Psoas muscle (tissue), 8 donors: ENCODE measurements at regions of chr7 and their contacts with region 1.

Region 1: DNA sequence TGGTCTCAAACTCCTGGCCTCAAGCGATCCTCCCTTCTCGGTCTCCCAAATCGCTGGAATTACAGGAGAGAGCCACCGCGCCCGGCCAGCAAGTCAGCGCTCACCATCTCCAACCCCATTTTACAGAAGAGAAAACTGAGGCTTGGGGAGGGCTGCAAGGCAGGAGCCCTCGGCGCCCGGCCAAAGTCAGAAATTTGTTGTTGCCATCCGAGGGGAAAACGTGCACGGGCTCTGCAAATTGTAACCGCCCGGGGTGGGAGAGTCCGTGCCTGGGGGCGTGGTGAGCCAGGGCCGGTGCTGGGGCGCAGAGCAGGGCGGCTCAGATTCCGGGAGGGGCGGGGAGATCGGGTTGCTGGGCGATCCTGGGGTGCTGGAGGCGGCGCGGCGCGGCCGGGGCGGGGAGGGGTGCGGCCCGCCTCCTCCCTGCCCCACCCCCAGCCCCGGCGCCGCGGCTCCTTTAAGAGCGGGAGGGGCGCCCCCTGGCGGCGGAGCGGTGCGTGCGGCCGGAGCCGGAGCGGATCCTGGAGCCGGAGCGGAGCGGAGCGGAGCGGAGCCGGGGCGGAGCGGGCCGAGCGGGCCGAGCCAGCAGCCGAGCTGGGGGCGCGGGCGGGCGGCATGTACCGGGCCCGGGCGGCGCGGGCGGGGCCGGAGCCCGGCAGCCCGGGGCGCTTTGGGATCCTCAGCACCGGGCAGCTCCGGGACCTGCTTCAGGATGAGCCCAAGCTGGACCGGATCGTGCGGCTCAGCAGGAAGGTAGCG is at the start of gene VPS37D:
- DNase-seq: peak; percentile 91 to 94
- ATAC-seq: peak; percentile 95 to 99 (median 96)
- H3K4me3 ChIP-seq: peak within 1 kb of the TSS; percentile 68
- H3K27ac ChIP-seq: no peak within 1 kb of the TSS
- H3K4me1 ChIP-seq: no peaks in the 10 kb centered on the region
- H3K27me3 ChIP-seq: no peaks in the 10 kb centered on the region
- CTCF ChIP-seq: peak; percentile 87
- total RNA-seq, gene VPS37D: 0.18 to 1.1 (median 0.72) TPM

Region 2: GRCh38 chr7:73615886-73616285 is 51.6 kb before region 1 on chr7:
- intact Hi-C with region 1: loop called in 1 of 2 experiments (anchors 2 kb)
- DNase-seq: no peak
- ATAC-seq: no peak
- H3K4me3 ChIP-seq: no peak overlapping the region
- H3K27ac ChIP-seq: no peak overlapping the region
- H3K4me1 ChIP-seq: peaks cover 20% of the 10 kb centered on the region
- H3K27me3 ChIP-seq: no peaks in the 10 kb centered on the region
- CTCF ChIP-seq: no peak

Region 3: DNA sequence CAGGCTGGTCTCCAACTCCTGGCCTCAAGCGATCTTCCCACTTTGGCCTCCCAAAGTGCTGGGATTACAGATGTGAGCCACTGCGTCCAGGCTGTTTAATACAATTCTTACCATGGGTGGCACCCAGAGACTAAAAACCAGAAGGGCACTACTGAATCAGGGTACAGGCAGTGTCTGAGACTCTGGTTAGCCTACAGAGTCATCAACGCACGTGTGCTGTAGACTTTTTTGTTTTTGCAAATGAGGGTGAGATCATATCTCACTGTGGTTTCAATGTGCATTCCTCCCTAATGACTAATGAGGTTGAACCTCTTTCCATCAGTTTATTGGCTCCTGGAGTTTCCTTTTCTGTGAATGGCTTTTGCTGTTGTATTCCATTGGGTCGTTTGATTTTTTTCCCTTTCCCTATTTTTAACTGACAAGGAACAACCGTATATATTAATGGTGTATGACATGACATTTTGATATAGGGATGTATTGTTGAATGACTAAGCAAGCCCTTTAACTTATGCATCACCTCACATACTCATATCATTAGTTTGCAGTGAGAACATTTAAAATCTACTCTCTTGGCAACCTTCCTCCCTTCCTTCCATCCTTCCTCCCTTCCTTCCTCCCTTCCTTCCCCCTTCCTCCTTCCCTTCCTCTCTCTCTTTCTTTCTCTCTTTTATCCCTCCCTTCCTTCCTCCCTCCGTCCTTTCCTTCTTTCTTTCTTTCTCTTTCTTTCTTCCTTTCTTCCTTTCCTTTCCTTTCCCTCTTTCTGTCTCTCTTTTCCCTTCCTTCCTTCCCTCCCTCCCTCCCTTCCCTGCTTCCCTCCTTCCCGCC is 184.1 kb after region 1 on chr7:
- intact Hi-C with region 1: no loop called
- DNase-seq: no peak
- ATAC-seq: peak; percentile 64 to 76 (median 75)
- H3K4me3 ChIP-seq: no peak overlapping the region
- H3K27ac ChIP-seq: peak overlapping the region; percentile 67
- H3K4me1 ChIP-seq: peaks cover 8% of the 10 kb centered on the region
- H3K27me3 ChIP-seq: peaks cover 0 to 2% (median 0%) of the 10 kb centered on the region in 3 donors
- CTCF ChIP-seq: no peak